Activated CD8-positive, alpha-beta memory T cell treated with anti-CD3 and anti-CD28 coated beads, Interleukin-2, amount 10 ng/mL, durations not matched to agents 7 days and 5 days (primary cell): ENCODE measurements at regions of chr12 and their contacts with region 1.

Region 1: DNA sequence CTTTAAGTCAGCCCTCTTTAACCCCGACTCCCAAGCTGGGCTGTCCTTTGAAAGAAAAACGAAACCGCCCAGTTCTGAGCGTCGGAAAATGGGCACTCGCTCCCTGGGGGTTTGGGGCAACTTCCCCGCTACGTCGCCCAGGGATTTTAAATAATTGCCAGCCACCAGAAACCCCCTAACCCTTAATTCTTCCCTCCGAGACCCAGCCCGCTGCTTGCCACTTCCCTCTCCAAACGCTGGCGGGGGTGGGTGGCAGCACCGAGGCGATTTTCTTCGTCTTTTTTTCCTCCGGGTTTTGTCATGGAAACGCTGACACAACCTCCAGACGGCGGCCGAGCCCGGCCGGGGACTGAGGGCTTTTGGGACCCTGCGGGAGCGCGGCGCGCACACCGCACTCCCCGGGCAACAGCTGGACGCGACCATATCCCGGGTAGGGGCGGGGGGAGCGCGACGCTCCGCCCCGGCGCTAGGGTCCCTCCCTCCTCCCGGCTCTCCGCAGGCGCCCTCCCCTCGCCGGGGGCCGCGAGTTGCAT is at the start of gene CHST11:
- DNase-seq: peak; percentile 85
- ATAC-seq: peak; percentile 75
- H3K4me3 Mint-ChIP-seq: peak within 1 kb of the TSS; percentile 89
- H3K27ac Mint-ChIP-seq: peak within 1 kb of the TSS; percentile 96
- H3K4me1 Mint-ChIP-seq: peaks cover 26% of the 10 kb centered on the region
- H3K27me3 Mint-ChIP-seq: no peaks in the 10 kb centered on the region
- total RNA-seq, gene CHST11: 123 to 141 TPM

Region 2: DNA sequence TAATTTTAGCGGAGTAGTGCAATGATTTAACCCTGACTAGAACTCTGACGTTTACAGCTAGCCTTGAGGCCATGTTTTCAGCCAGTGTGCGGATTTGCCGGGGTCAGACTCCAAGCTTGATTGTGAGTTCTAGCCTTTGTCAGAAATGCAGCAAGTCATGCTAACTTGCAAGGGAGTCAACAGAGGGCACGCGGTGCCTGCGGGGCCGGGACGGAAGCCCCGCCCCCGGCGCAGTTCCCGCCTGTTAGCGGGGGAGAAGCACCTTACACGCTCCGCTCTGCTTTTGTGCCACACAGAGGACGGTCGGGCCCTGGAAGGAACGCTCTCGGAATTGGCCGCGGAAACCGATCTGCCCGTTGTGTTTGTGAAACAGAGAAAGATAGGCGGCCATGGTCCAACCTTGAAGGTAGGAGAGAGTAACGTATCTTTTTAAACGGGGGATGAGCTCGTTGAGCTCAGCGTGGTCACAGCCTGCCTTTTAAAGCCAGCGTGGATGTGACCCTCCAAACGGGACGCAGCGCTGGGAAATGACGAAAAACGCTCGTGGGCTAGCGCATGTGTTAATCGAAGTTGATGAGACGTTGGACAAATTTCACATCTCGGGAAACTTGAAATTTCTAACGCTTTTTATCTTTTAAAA is 167.7 kb before region 1 on chr12:
- CTCF ChIA-PET with region 1: no interaction called
- DNase-seq: peak; percentile 92
- ATAC-seq: peak; percentile 67
- H3K4me3 Mint-ChIP-seq: peak overlapping the region; percentile 91
- H3K27ac Mint-ChIP-seq: peak overlapping the region; percentile 100
- H3K4me1 Mint-ChIP-seq: peaks cover 35% of the 10 kb centered on the region
- H3K27me3 Mint-ChIP-seq: no peaks in the 10 kb centered on the region

Region 3: DNA sequence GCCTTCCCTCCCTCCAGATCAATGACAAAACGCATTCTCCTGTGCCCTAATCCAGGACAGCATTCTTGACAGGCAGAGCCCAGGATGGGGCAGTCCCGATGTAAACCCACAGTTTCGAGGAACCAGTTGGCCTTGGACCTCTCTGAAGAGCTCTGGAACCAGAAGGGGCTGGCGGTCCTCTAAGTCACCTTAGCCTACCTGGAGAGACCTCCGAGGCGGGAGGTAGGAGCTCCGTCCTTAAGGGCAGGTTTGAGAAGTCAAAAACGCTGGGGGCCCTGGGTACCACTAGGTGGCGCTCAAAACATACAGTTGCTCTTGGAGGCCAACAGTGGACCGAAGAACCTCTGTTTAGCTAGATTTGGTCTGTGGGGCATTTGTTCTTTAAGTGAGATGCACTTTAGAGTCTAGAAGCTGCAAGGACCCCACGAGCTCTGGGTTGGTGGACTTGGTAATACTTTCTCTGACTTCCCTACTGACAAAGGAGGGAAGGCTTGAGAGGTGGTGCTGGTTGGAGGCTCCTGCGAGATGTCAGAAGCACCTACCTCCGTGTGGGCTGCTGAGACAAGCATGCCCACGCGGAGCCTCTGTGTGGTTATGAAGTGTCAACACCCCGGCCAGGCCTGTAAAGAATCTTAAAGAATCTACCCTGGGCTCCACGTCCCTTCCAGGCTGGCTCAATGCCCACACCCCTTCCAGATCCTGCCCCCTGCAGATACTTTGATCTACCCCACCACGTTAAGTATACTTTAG is 74.6 kb before region 1 on chr12:
- CTCF ChIA-PET with region 1: interaction called, 46 read pairs
- DNase-seq: peak; percentile 88
- ATAC-seq: peak; percentile 90
- H3K4me3 Mint-ChIP-seq: no peak overlapping the region
- H3K27ac Mint-ChIP-seq: peak overlapping the region; percentile 16
- H3K4me1 Mint-ChIP-seq: peaks cover 14% of the 10 kb centered on the region
- H3K27me3 Mint-ChIP-seq: peaks cover 8% of the 10 kb centered on the region

Region 4: DNA sequence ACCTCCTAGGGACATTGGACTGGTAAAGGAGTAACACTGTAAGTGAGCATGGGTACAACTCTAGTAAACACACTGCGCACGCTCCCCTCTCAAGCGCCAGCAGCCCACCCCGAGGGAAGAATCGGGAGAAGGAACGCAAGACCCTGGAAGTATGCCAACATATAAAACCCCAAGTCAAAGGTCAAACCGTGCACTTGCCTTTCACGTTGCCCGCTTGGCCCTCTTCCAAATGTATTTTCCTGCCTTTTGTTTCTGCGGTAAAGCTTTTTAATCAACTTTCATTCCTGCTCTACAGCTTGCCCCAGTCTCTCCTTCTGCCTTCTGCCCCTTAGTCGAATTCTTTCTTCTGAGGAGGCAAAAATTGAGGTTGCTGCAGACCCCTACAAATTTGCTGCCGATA is 17.3 kb before region 1 on chr12:
- CTCF ChIA-PET with region 1: no interaction called
- DNase-seq: no peak
- ATAC-seq: no peak
- H3K4me3 Mint-ChIP-seq: no peak overlapping the region
- H3K27ac Mint-ChIP-seq: no peak overlapping the region
- H3K4me1 Mint-ChIP-seq: peaks cover 3% of the 10 kb centered on the region
- H3K27me3 Mint-ChIP-seq: peaks cover 19% of the 10 kb centered on the region

Region 5: GRCh38 chr12:104467346-104467837 is 10.9 kb after region 1 on chr12:
- CTCF ChIA-PET with region 1: interaction called, 16 read pairs
- DNase-seq: no peak
- ATAC-seq: peak; percentile 49
- H3K4me3 Mint-ChIP-seq: peak overlapping the region; percentile 51
- H3K27ac Mint-ChIP-seq: peak overlapping the region; percentile 80
- H3K4me1 Mint-ChIP-seq: peaks cover 97% of the 10 kb centered on the region
- H3K27me3 Mint-ChIP-seq: no peaks in the 10 kb centered on the region

Region 6: DNA sequence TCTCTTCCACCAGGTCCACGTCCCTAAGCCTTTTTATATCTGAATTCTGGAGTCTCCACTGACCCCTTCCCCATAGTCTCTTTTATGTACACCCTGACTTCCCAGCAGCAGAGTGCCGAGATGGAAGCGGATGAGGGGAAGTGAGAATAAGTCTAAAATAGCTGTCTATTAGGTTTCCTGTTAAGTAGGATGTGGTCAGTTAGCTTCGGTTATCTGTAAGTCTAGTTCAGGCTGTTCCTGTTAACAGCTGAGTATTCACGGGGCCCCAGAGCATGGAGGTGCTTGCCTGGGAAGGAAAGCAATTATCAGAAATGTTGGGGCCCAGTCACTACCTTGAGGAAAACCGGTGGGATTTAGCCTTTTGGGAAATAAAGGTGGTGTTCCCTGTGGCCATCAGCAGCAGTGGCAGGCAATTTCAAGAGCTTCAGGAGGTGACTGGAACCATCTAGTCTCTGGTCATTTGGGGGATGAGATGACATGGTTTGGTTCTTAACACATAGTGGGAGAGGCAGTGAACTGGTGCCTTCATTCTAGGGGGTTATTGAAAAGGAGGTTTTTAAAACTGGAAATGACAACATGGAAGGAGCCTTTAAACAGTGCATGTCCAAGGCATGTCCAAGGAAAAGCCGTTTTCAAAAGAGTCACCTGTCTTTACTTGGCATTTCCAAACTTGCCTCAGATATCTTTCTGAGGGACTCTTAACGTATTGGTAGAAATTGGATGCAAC is 22.1 kb after region 1 on chr12:
- CTCF ChIA-PET with region 1: interaction called, 22 read pairs
- DNase-seq: peak; percentile 70
- ATAC-seq: peak; percentile 84
- H3K4me3 Mint-ChIP-seq: peak overlapping the region; percentile 81
- H3K27ac Mint-ChIP-seq: peak overlapping the region; percentile 97
- H3K4me1 Mint-ChIP-seq: peaks cover 85% of the 10 kb centered on the region
- H3K27me3 Mint-ChIP-seq: no peaks in the 10 kb centered on the region

Region 7: DNA sequence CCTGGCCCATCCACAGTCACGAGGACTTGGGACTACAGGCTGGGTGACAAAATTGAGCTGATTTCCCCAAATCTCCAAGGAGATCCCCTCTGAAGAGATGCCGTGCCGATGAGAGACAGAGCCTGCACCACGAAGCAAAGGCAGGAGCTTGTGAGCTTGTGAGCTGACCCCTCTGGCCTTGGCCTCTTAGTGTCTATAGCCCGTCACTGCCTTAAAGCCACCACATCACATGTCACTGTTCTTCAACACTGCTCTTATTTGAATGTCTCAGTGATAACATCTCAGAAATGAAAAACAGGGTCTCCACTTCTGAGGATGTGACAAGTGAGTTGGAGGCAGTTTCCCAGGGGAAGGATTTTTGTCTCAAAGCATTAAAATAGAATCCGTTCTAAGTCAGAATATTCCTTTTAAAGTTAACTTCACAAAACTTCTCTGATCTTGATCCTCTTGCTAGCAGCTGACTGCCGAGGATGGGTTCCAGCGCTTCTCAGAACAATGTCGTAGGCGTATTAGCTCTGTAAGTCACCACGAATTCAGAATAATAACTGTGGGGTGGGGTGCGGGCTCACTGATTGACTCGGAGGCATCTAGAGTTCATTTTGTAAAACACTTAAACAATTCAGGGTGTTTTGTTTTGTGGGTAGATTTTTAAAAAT is 37.8 kb after region 1 on chr12:
- CTCF ChIA-PET with region 1: interaction called, 17 read pairs
- DNase-seq: peak; percentile 89
- ATAC-seq: peak; percentile 74
- H3K4me3 Mint-ChIP-seq: peak overlapping the region; percentile 70
- H3K27ac Mint-ChIP-seq: peak overlapping the region; percentile 93
- H3K4me1 Mint-ChIP-seq: peaks cover 86% of the 10 kb centered on the region
- H3K27me3 Mint-ChIP-seq: no peaks in the 10 kb centered on the region

Region 8: GRCh38 chr12:104569346-104570173 is 113.1 kb after region 1 on chr12:
- CTCF ChIA-PET with region 1: interaction called, 28 read pairs
- DNase-seq: peak; percentile 90
- ATAC-seq: peak; percentile 80
- H3K4me3 Mint-ChIP-seq: peak overlapping the region; percentile 54
- H3K27ac Mint-ChIP-seq: peak overlapping the region; percentile 94
- H3K4me1 Mint-ChIP-seq: peaks cover 77% of the 10 kb centered on the region
- H3K27me3 Mint-ChIP-seq: no peaks in the 10 kb centered on the region

Region 9: GRCh38 chr12:104578453-104578852 is 122.0 kb after region 1 on chr12:
- CTCF ChIA-PET with region 1: interaction called, 12 read pairs
- DNase-seq: peak; percentile 56
- ATAC-seq: peak; percentile 44
- H3K4me3 Mint-ChIP-seq: peak overlapping the region; percentile 22
- H3K27ac Mint-ChIP-seq: peak overlapping the region; percentile 36
- H3K4me1 Mint-ChIP-seq: peaks cover 90% of the 10 kb centered on the region
- H3K27me3 Mint-ChIP-seq: no peaks in the 10 kb centered on the region